PC-9 (cell line): ENCODE measurements at regions of chr10 and their contacts with region 1.

Region 1: GRCh38 chr10:110016039-110016438 is 8.3 kb downstream of the ADD3 start:
- DNase-seq: no peak
- H3K4me3 ChIP-seq: no peak overlapping the region
- H3K27ac ChIP-seq: no peak overlapping the region
- H3K4me1 ChIP-seq: peaks cover 29% of the 10 kb centered on the region
- H3K27me3 ChIP-seq: no peaks in the 10 kb centered on the region
- CTCF ChIP-seq: 0 out of 2 replicates have a peak, but pooled peaks have one; percentile 20

Region 2: DNA sequence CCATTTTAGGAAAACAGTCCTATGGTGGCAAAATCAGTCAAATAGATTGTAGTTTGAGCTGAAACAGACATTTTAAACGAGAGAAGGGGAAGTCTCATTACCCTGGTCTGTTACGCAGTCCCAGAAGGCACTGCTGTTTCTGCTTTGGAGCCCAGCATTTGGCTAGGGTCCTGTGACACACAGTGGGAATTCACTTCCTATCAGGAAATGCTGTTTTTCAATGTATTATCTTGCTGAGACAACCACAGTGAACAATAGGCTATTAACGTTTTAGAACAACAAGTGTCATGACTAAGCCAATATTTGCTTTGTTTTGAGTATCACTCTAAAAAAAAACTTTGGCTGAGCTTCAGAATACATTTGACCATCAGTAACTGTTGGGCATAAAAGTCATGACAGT is 65.9 kb after region 1 on chr10:
- CTCF ChIA-PET with region 1: no interaction called
- POLR2A ChIA-PET with region 1: interaction called, 10 read pairs
- intact Hi-C with region 1: no loop called
- DNase-seq: peak in 1 of 2 experiments; percentile 47
- H3K4me3 ChIP-seq: no peak overlapping the region
- H3K27ac ChIP-seq: no peak overlapping the region
- H3K4me1 ChIP-seq: peaks cover 22% of the 10 kb centered on the region
- H3K27me3 ChIP-seq: no peaks in the 10 kb centered on the region
- CTCF ChIP-seq: no peak

Region 3: GRCh38 chr10:110610308-110610774 is 594.3 kb after region 1 on chr10:
- CTCF ChIA-PET with region 1: no interaction called
- POLR2A ChIA-PET with region 1: no interaction called
- intact Hi-C with region 1: no loop called
- DNase-seq: peak; percentile 40 to 92
- H3K4me3 ChIP-seq: no peak overlapping the region
- H3K27ac ChIP-seq: no peak overlapping the region
- H3K4me1 ChIP-seq: 0 out of 2 replicates have a peak, but pooled peaks cover 6% of the 10 kb centered on the region
- H3K27me3 ChIP-seq: no peaks in the 10 kb centered on the region
- CTCF ChIP-seq: peak; percentile 79